IMR-90 (cell line): ENCODE measurements at regions of chr2 and their contacts with region 1.

Region 1: DNA sequence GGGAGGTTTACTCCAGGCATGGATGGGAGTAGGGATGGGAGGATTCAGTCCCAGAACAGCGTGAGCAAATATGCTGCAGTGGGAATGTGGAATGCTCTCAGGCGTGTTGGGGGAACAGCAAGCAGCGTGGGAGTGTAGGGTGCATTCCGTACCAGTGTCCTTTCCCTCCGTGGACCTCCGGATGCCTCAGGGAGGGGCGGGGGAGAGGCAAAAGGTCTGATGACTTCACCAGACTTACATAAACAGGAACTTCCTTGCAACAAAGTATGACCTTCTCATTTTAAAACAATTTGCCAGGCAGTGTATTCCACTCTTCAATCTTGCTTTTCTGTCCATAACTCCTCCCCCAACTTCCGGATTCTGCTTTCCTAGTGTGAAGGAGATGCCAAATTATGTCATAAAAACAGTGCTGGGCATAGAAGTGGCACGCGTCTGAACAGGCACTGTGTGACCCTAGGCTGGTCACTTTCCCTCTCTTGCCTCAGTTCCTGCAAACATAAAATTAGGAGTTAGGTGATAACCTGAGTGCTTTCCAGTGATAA is 36.9 kb downstream of the RPL37A start:
- DNase-seq: peak; percentile 99
- ATAC-seq: peak; percentile 92
- H3K4me3 ChIP-seq: no peak overlapping the region
- H3K27ac ChIP-seq: peak overlapping the region; percentile 95
- H3K4me1 ChIP-seq: peaks cover 31% of the 10 kb centered on the region
- H3K27me3 ChIP-seq: no peaks in the 10 kb centered on the region
- CTCF ChIP-seq: no peak
- POLR2A ChIP-seq: no peak
- RAD21 ChIP-seq: peak; percentile 34

Region 2: GRCh38 chr2:216519154-216519762 is 16.3 kb before region 1 on chr2:
- CTCF ChIA-PET with region 1: no interaction called
- POLR2A ChIA-PET with region 1: interaction called, 3 read pairs
- dilution Hi-C with region 1: no loop called
- in situ Hi-C with region 1: no loop called
- intact Hi-C with region 1: loop called (anchors 1 kb)
- DNase-seq: peak; percentile 89
- ATAC-seq: peak; percentile 85
- H3K4me3 ChIP-seq: no peak overlapping the region
- H3K27ac ChIP-seq: no peak overlapping the region
- H3K4me1 ChIP-seq: peaks cover 7% of the 10 kb centered on the region
- H3K27me3 ChIP-seq: no peaks in the 10 kb centered on the region
- CTCF ChIP-seq: peak; percentile 80
- POLR2A ChIP-seq: no peak
- RAD21 ChIP-seq: peak; percentile 86

Region 3: DNA sequence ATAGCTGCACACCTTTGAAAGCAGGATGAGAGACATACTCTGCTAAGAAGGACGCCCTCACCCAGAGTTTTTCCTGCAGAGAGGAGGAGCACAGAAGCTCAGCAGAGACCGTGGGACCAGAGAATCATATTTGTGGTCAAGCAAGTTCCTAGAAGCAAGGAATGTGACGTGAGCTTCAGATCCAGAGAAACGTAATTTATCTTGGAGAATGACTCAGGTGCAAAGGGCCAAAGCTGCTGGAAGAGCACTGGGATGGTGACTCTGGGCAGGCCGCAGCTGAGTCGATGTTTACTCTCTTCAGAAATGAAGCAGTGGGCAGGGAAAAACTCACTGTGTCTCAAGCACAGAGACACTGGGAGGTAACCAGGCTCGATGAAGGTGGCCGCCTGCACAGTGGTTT is 47.6 kb after region 1 on chr2:
- CTCF ChIA-PET with region 1: no interaction called
- POLR2A ChIA-PET with region 1: interaction called, 6 read pairs
- dilution Hi-C with region 1: no loop called
- in situ Hi-C with region 1: no loop called
- intact Hi-C with region 1: loop called (anchors 1 kb)
- DNase-seq: peak; percentile 99
- ATAC-seq: peak; percentile 94
- H3K4me3 ChIP-seq: no peak overlapping the region
- H3K27ac ChIP-seq: no peak overlapping the region
- H3K4me1 ChIP-seq: peaks cover 10% of the 10 kb centered on the region
- H3K27me3 ChIP-seq: no peaks in the 10 kb centered on the region
- CTCF ChIP-seq: no peak
- POLR2A ChIP-seq: no peak
- RAD21 ChIP-seq: peak; percentile 38

Region 4: DNA sequence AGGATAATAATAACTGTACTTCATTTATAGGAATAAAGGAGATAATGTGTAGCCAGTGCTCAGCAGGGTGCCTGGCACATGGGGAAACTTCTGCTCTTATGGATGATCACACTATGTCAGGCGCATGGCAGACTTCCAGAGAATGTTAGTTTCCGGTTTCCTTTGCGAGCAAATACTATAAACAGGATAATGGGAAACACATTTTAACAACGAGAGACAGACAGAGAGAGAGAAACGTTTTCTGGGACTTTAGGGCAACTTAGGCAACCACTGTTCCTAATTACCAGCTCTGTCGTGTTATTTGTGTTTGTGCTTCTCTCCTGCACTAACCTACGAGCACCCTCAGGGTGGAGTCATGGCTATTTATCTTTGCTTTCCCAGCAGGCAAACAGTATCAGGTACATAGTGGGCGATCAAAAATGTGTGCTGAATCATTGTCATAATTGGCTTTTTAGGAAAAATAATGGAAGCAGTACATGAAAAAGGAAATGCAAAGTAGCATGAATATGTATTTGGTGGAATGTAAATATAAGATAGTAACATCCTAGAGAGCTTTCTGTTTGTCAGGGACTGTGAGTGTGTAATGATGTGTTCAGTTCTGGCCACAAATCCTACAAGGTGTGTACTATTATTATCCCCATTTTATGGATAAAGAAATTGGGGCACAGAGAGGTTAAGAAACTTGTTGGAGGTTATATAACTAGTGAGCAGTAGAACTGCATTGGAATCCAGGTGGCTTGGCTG is 60.9 kb after region 1 on chr2:
- CTCF ChIA-PET with region 1: no interaction called
- POLR2A ChIA-PET with region 1: no interaction called
- dilution Hi-C with region 1: no loop called
- in situ Hi-C with region 1: no loop called
- intact Hi-C with region 1: loop called (anchors 1 kb)
- DNase-seq: peak; percentile 87
- ATAC-seq: peak; percentile 66
- H3K4me3 ChIP-seq: peak overlapping the region; percentile 0; the same call in 1 of the 2 replicates
- H3K27ac ChIP-seq: peak overlapping the region; percentile 5; the same call in 1 of the 2 replicates
- H3K4me1 ChIP-seq: peaks cover 5% of the 10 kb centered on the region
- H3K27me3 ChIP-seq: peaks cover 2% of the 10 kb centered on the region; the same call in 1 of the 2 replicates
- CTCF ChIP-seq: no peak
- POLR2A ChIP-seq: no peak
- RAD21 ChIP-seq: no peak

Region 5: DNA sequence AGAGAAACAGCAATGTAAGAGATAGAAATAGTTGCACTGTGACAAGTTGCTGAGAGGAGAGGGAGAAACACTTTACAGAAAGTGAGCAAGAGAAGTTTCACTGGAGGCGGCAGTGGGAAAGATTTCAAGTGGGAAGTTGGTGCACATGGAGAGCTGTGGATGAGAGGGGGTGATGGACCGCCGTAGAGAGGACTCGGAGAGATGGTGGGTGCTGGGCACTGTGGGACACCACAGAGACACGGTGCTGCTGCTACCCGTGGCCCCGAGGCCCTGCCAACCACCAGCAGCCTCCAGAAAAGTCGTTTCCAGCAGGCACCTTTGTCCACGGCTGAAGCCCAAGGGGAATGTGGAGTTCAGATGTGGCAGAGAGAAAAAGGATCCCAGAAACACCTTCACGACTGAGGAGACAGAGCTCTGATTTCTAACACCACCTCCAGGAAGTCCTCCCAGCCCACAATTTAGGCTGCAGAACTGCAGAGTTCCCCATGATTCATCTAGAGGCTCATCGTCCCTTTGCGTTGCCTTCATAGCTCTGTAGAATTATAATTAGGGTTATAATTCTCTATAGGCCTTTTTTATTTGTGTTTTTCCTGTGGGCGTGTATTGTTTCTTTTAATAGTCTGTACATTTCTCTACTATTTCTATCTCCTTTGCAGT is 81.8 kb after region 1 on chr2:
- CTCF ChIA-PET with region 1: no interaction called
- POLR2A ChIA-PET with region 1: interaction called, 13 read pairs
- dilution Hi-C with region 1: no loop called
- in situ Hi-C with region 1: no loop called
- intact Hi-C with region 1: no loop called
- DNase-seq: no peak
- ATAC-seq: no peak
- H3K4me3 ChIP-seq: no peak overlapping the region
- H3K27ac ChIP-seq: no peak overlapping the region
- H3K4me1 ChIP-seq: peaks cover 7% of the 10 kb centered on the region; the same call in 1 of the 2 replicates
- H3K27me3 ChIP-seq: peaks cover 14% of the 10 kb centered on the region
- CTCF ChIP-seq: no peak
- POLR2A ChIP-seq: no peak
- RAD21 ChIP-seq: no peak

Region 6: DNA sequence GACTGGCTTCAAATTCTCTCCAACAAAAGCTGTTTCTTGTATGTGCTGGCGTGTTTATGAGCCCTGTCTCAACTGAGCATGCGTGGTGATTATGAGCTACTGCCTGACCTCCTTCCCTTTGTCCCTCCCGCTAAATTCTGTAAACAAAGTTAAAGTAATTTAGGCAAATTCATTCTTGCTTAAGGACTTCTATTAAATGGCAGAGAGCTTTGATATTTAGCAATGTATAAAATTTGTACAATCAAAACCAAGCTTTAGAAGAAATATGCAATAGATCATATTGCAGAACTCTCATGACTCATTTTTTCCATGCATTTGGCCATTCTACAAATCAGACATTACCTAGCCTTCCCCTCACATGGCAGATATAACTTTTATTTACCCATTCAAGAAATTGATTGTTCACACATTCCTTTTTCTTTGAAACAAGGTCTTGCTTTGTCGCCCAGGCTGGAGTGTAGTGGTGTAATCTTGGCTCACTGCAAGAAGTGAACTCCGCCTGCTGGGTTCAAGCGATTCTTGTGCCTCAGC is 115.9 kb after region 1 on chr2:
- CTCF ChIA-PET with region 1: no interaction called
- POLR2A ChIA-PET with region 1: no interaction called
- dilution Hi-C with region 1: no loop called
- in situ Hi-C with region 1: no loop called
- intact Hi-C with region 1: loop called (anchors 1 kb)
- DNase-seq: peak; percentile 87
- ATAC-seq: peak; percentile 27
- H3K4me3 ChIP-seq: no peak overlapping the region
- H3K27ac ChIP-seq: peak overlapping the region; percentile 78; the same call in 1 of the 2 replicates
- H3K4me1 ChIP-seq: peaks cover 29% of the 10 kb centered on the region; the same call in 1 of the 2 replicates
- H3K27me3 ChIP-seq: peaks cover 1% of the 10 kb centered on the region; the same call in 1 of the 2 replicates
- CTCF ChIP-seq: no peak
- POLR2A ChIP-seq: no peak
- RAD21 ChIP-seq: no peak